Left lung (tissue), 14 donors: ENCODE measurements at regions of chr11 and their contacts with region 1.

Region 1: GRCh38 chr11:85423305-85423704 is 203.8 kb downstream of the DLG2 start:
- DNase-seq: no peak
- ATAC-seq: no peak
- H3K4me3 ChIP-seq: no peak overlapping the region
- H3K27ac ChIP-seq: no peak overlapping the region
- H3K4me1 ChIP-seq: no peaks in the 10 kb centered on the region
- H3K27me3 ChIP-seq: no peaks in the 10 kb centered on the region
- CTCF ChIP-seq: no peak

Region 2: GRCh38 chr11:85359859-85360258 is 63.4 kb before region 1 on chr11:
- intact Hi-C with region 1: loop called in 1 of 2 experiments (anchors 10 kb)
- DNase-seq: no peak
- ATAC-seq: no peak
- H3K4me3 ChIP-seq: no peak overlapping the region
- H3K27ac ChIP-seq: no peak overlapping the region
- H3K4me1 ChIP-seq: no peaks in the 10 kb centered on the region
- H3K27me3 ChIP-seq: no peaks in the 10 kb centered on the region
- CTCF ChIP-seq: no peak